Esophagus squamous epithelium (tissue), 5 donors: ENCODE measurements at regions of chr1 and their contacts with region 1.

Region 1: GRCh38 chr1:40039757-40040510 is 595 bp upstream of the CAP1 start:
- DNase-seq: peak; percentile 54
- H3K4me3 ChIP-seq: peak overlapping the region; percentile 88 to 98 (median 94)
- H3K27ac ChIP-seq: peak overlapping the region; percentile 90 to 100 (median 98)
- H3K4me1 ChIP-seq: peaks cover 24 to 74% (median 52%) of the 10 kb centered on the region in 3 donors
- H3K27me3 ChIP-seq: no peaks in the 10 kb centered on the region
- CTCF ChIP-seq: peak in 1 of 6 experiments; percentile 2
- POLR2A ChIP-seq: peak in 3 of 4 donors; percentile 79 to 97 (median 79)

Region 2: GRCh38 chr1:39901698-39902459 is 138.1 kb before region 1 on chr1 and contains the start of gene MYCL:
- intact Hi-C with region 1: no loop called
- DNase-seq: no peak
- H3K4me3 ChIP-seq: peak within 1 kb of the TSS; percentile 58 to 83 (median 74)
- H3K27ac ChIP-seq: peak within 1 kb of the TSS; percentile 57 to 92 (median 85)
- H3K4me1 ChIP-seq: peaks cover 17 to 60% (median 19%) of the 10 kb centered on the region in 3 donors
- H3K27me3 ChIP-seq: peaks cover 0 to 69% (median 0%) of the 10 kb centered on the region in 4 donors
- CTCF ChIP-seq: peak; percentile 64 to 93 (median 84)
- POLR2A ChIP-seq: peak in 3 of 4 donors; percentile 45 to 71 (median 64)
- total RNA-seq, gene MYCL: 15.4 to 27.6 (median 24.8) TPM

Region 3: GRCh38 chr1:39981957-39982356 is 58.0 kb before region 1 on chr1:
- intact Hi-C with region 1: loop called (anchors 10 kb)
- DNase-seq: no peak
- H3K4me3 ChIP-seq: no peak overlapping the region
- H3K27ac ChIP-seq: no peak overlapping the region
- H3K4me1 ChIP-seq: peaks cover 0 to 27% (median 6%) of the 10 kb centered on the region in 3 donors
- H3K27me3 ChIP-seq: no peaks in the 10 kb centered on the region
- CTCF ChIP-seq: no peak
- POLR2A ChIP-seq: no peak